ENCODE measurements at regions of chr3 and their contacts with region 1.

Region 1: DNA sequence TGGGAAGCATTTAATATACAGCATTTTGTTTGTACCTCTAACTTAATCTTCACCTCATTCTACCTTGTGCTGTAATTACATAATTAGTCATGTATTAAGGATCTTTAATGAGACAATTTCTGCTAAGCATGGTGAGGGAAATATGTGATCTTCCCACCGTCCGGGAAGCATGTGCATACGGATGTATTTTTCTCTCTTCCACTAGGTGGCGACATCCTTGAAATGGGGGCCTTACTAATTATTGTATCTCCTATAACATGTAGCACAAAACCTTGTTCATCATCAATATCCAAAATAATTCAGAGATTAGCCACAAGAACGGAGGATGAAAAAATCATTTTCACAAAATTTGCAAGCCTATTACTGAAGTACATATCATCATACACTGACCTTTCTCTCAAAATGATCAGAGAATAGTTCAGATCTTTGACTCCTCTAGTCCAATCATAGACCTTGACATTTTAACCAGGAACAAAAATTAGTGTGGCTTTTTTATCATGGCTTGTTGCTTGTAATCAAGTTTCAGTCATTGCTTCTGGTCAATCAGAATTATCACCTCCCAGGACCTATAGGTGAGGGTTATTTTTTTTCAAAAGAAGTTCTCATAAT is 148.9 kb upstream of the GBE1 start:
- DNase-seq: peak in 5 of 9 donors; percentile 3 to 40 (median 10)
- ATAC-seq: peak; percentile 45
- H3K4me3 ChIP-seq: no peak overlapping the region
- H3K4me3 Mint-ChIP-seq: no peak overlapping the region
- H3K27ac ChIP-seq: no peak overlapping the region
- H3K27ac Mint-ChIP-seq: no peak overlapping the region
- H3K4me1 ChIP-seq: no peaks in the 10 kb centered on the region
- H3K4me1 Mint-ChIP-seq: peaks cover 0 to 2% (median 0%) of the 10 kb centered on the region in 7 donors
- H3K27me3 ChIP-seq: no peaks in the 10 kb centered on the region
- H3K27me3 Mint-ChIP-seq: peaks cover 0 to 10% (median 8%) of the 10 kb centered on the region in 5 donors

Region 2: DNA sequence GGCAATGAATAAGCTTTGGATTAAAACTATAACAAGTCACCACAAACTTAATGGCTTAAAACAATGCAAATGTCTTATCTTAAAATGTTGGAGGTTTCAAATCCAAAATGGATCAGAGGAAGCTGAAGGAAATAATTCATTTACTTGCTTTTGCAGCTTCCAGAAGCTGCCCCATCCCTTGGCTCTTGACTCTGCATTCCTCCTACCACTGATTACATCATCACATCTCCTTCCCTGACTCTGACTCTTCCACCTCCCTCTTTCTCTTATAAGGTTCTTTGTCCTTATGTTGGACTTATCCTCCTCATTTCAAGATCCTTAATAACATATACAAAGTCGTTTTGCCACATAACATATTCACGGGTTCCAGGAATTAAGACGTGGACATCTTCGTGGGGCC is 1159.7 kb before region 1 on chr3:
- CTCF ChIA-PET with region 1: no interaction called
- POLR2A ChIA-PET with region 1: no interaction called
- intact Hi-C with region 1: loop called in 1 of 2 experiments (anchors 10 kb)
- DNase-seq: no peak
- ATAC-seq: no peak
- H3K4me3 ChIP-seq: no peak overlapping the region
- H3K4me3 Mint-ChIP-seq: no peak overlapping the region
- H3K27ac ChIP-seq: no peak overlapping the region
- H3K27ac Mint-ChIP-seq: no peak overlapping the region
- H3K4me1 ChIP-seq: no peaks in the 10 kb centered on the region
- H3K4me1 Mint-ChIP-seq: no peaks in the 10 kb centered on the region
- H3K27me3 ChIP-seq: no peaks in the 10 kb centered on the region
- H3K27me3 Mint-ChIP-seq: no peaks in the 10 kb centered on the region

Region 3: DNA sequence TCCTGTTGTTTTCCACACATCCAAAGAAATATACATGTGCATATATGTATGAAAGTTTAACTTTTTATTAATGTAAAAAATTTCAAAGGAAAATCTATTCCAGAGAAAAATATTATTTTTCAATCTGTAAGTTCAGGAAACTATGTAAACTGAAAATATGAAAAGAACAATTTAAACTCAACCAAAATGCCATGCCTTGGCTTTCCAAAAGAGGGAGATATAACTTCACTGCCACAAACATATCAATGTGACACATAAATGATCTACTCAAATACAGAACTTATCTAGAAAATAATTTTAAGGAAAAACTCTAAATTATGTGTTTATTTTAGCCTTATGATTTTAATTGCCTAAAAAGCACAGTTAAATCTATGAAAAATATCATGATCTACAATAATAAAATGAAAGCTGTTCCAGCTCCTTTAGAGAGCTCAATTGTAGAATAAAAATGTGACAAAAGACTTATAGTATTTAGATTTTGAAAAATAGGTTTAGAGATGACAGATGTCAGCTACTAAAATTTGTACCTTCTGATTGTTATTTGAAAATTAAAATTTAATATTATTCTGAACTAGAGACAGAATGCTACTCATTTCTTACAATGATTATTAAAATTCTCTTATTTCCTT is 243.7 kb before region 1 on chr3:
- CTCF ChIA-PET with region 1: no interaction called
- POLR2A ChIA-PET with region 1: no interaction called
- intact Hi-C with region 1: loop called (anchors 5 to 10 kb)
- DNase-seq: peak in 5 of 9 donors; percentile 1 to 9 (median 3)
- ATAC-seq: no peak
- H3K4me3 ChIP-seq: no peak overlapping the region
- H3K4me3 Mint-ChIP-seq: no peak overlapping the region
- H3K27ac ChIP-seq: no peak overlapping the region
- H3K27ac Mint-ChIP-seq: no peak overlapping the region
- H3K4me1 ChIP-seq: no peaks in the 10 kb centered on the region
- H3K4me1 Mint-ChIP-seq: peaks cover 0 to 2% (median 0%) of the 10 kb centered on the region in 7 donors
- H3K27me3 ChIP-seq: no peaks in the 10 kb centered on the region
- H3K27me3 Mint-ChIP-seq: no peaks in the 10 kb centered on the region

Region 4: GRCh38 chr3:81864272-81864671 is 46.1 kb before region 1 on chr3:
- CTCF ChIA-PET with region 1: no interaction called
- POLR2A ChIA-PET with region 1: no interaction called
- intact Hi-C with region 1: no loop called
- DNase-seq: no peak
- ATAC-seq: no peak
- H3K4me3 ChIP-seq: no peak overlapping the region
- H3K4me3 Mint-ChIP-seq: no peak overlapping the region
- H3K27ac ChIP-seq: no peak overlapping the region
- H3K27ac Mint-ChIP-seq: no peak overlapping the region
- H3K4me1 ChIP-seq: no peaks in the 10 kb centered on the region
- H3K4me1 Mint-ChIP-seq: no peaks in the 10 kb centered on the region
- H3K27me3 ChIP-seq: no peaks in the 10 kb centered on the region
- H3K27me3 Mint-ChIP-seq: peaks cover 0 to 26% (median 19%) of the 10 kb centered on the region in 5 donors

Region 5: DNA sequence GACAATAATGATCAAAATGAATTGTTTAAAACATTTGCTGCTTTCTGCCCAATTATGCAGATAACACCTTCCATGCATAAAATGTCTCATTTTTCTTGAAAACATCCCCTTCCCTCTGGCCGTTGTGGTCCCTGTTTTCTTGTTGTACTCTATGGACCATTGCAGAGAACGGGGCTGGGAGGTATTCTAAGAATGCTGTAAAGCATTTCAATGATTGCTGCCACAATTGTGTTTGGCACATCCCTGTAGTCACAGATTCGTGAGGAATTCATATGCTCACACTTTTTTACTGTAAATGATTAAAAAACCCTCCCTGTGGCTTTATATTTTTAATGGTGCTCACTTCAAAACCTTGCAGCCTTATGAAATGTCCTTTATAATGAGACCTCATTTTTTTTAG is 58.3 kb after region 1 on chr3:
- CTCF ChIA-PET with region 1: no interaction called
- POLR2A ChIA-PET with region 1: no interaction called
- intact Hi-C with region 1: no loop called
- DNase-seq: no peak
- ATAC-seq: no peak
- H3K4me3 ChIP-seq: no peak overlapping the region
- H3K4me3 Mint-ChIP-seq: no peak overlapping the region
- H3K27ac ChIP-seq: no peak overlapping the region
- H3K27ac Mint-ChIP-seq: no peak overlapping the region
- H3K4me1 ChIP-seq: no peaks in the 10 kb centered on the region
- H3K4me1 Mint-ChIP-seq: no peaks in the 10 kb centered on the region
- H3K27me3 ChIP-seq: no peaks in the 10 kb centered on the region
- H3K27me3 Mint-ChIP-seq: peaks cover 0 to 9% (median 0%) of the 10 kb centered on the region in 5 donors

Region 6: DNA sequence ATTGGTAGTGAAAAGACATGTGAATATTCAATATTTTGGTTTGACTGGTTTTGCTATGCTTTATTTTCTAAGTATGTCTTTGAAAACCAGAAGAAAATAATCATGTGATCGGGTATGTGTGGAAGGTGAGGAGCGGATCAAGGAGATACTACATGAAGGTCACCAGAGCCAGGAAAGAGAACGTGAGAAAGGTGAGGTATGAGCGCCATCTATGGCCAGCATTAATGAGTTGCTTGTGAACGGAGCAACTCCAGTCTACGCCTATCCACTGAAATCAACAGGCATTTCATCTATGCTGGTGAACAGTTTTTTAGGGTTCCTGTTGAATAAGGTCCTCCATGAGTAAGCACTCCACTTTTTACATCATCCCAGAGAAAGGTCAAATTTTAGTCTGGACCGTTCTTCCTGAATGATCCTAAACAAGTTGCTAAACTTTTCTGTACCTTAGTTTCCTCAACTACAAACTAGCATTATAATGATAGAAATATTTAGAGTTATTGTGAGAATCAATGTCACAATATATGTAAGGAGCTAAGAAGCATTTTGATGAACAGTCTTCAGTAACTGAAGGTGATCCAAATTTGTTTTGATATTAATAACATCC is 1613.2 kb after region 1 on chr3:
- CTCF ChIA-PET with region 1: no interaction called
- POLR2A ChIA-PET with region 1: no interaction called
- intact Hi-C with region 1: loop called in 1 of 2 experiments (anchors 5 kb)
- DNase-seq: no peak
- ATAC-seq: no peak
- H3K4me3 ChIP-seq: no peak overlapping the region
- H3K4me3 Mint-ChIP-seq: no peak overlapping the region
- H3K27ac ChIP-seq: no peak overlapping the region
- H3K27ac Mint-ChIP-seq: no peak overlapping the region
- H3K4me1 ChIP-seq: no peaks in the 10 kb centered on the region
- H3K4me1 Mint-ChIP-seq: no peaks in the 10 kb centered on the region
- H3K27me3 ChIP-seq: no peaks in the 10 kb centered on the region
- H3K27me3 Mint-ChIP-seq: no peaks in the 10 kb centered on the region